ENCODE measurements at regions of chr4 and their contacts with region 1.

Region 1: GRCh38 chr4:153931804-153932203 is 142.9 kb upstream of the SFRP2 start:
- DNase-seq: no peak
- ATAC-seq: no peak
- H3K4me3 ChIP-seq: no peak overlapping the region
- H3K4me3 Mint-ChIP-seq: no peak overlapping the region
- H3K27ac ChIP-seq: no peak overlapping the region
- H3K27ac Mint-ChIP-seq: no peak overlapping the region
- H3K4me1 ChIP-seq: no peaks in the 10 kb centered on the region
- H3K4me1 Mint-ChIP-seq: no peaks in the 10 kb centered on the region
- H3K27me3 ChIP-seq: no peaks in the 10 kb centered on the region
- H3K27me3 Mint-ChIP-seq: peaks cover 14 to 20% of the 10 kb centered on the region in 2 donors
- CTCF ChIP-seq: no peak

Region 2: DNA sequence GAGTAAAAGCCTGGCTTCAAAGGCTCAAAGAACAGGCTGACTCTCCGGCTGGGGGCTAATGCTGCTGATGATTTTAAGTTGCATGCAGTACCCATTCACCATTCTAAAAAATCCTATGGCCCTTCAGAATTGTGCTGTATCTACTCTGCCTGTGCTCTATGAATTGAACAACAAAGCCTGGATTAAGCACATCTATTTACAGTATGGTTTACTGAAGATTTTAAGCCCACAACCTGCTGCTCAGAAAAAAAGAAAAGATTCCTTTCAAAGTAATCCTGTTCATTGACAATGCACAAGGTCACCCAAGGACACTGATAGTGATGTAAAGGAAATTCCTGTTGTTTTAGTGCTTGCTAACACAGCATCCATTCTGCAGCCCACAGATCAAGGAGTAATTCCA is 58.1 kb before region 1 on chr4:
- intact Hi-C with region 1: no loop called
- DNase-seq: no peak
- ATAC-seq: no peak
- H3K4me3 ChIP-seq: no peak overlapping the region
- H3K4me3 Mint-ChIP-seq: no peak overlapping the region
- H3K27ac ChIP-seq: no peak overlapping the region
- H3K27ac Mint-ChIP-seq: no peak overlapping the region
- H3K4me1 ChIP-seq: no peaks in the 10 kb centered on the region
- H3K4me1 Mint-ChIP-seq: no peaks in the 10 kb centered on the region
- H3K27me3 ChIP-seq: no peaks in the 10 kb centered on the region
- H3K27me3 Mint-ChIP-seq: peaks cover 0 to 10% of the 10 kb centered on the region in 2 donors
- CTCF ChIP-seq: no peak

Region 3: GRCh38 chr4:154124539-154125255 is 192.9 kb after region 1 on chr4:
- intact Hi-C with region 1: loop called (anchors 10 kb)
- DNase-seq: no peak
- ATAC-seq: no peak
- H3K4me3 ChIP-seq: no peak overlapping the region
- H3K4me3 Mint-ChIP-seq: no peak overlapping the region
- H3K27ac ChIP-seq: no peak overlapping the region
- H3K27ac Mint-ChIP-seq: no peak overlapping the region
- H3K4me1 ChIP-seq: no peaks in the 10 kb centered on the region
- H3K4me1 Mint-ChIP-seq: no peaks in the 10 kb centered on the region
- H3K27me3 ChIP-seq: no peaks in the 10 kb centered on the region
- H3K27me3 Mint-ChIP-seq: no peaks in the 10 kb centered on the region
- CTCF ChIP-seq: no peak